Lower lobe of right lung (tissue), 2 donors: ENCODE measurements at regions of chr12 and their contacts with region 1.

Region 1: GRCh38 chr12:76790564-76791552 is 26.9 kb downstream of the ZDHHC17 start:
- DNase-seq: no peak
- ATAC-seq: peak; percentile 54 to 60
- H3K4me3 ChIP-seq: no peak overlapping the region
- H3K27ac ChIP-seq: no peak overlapping the region
- H3K4me1 ChIP-seq: no peaks in the 10 kb centered on the region
- H3K27me3 ChIP-seq: no peaks in the 10 kb centered on the region
- CTCF ChIP-seq: peak; percentile 62

Region 2: GRCh38 chr12:76621582-76622024 is 169.3 kb before region 1 on chr12:
- intact Hi-C with region 1: loop called (anchors 5 kb)
- DNase-seq: peak; percentile 54
- ATAC-seq: peak; percentile 91 to 92
- H3K4me3 ChIP-seq: no peak overlapping the region
- H3K27ac ChIP-seq: no peak overlapping the region
- H3K4me1 ChIP-seq: peaks cover 5% of the 10 kb centered on the region
- H3K27me3 ChIP-seq: no peaks in the 10 kb centered on the region
- CTCF ChIP-seq: peak; percentile 92